ENCODE measurements at regions of chr13 and their contacts with region 1.

Region 1: DNA sequence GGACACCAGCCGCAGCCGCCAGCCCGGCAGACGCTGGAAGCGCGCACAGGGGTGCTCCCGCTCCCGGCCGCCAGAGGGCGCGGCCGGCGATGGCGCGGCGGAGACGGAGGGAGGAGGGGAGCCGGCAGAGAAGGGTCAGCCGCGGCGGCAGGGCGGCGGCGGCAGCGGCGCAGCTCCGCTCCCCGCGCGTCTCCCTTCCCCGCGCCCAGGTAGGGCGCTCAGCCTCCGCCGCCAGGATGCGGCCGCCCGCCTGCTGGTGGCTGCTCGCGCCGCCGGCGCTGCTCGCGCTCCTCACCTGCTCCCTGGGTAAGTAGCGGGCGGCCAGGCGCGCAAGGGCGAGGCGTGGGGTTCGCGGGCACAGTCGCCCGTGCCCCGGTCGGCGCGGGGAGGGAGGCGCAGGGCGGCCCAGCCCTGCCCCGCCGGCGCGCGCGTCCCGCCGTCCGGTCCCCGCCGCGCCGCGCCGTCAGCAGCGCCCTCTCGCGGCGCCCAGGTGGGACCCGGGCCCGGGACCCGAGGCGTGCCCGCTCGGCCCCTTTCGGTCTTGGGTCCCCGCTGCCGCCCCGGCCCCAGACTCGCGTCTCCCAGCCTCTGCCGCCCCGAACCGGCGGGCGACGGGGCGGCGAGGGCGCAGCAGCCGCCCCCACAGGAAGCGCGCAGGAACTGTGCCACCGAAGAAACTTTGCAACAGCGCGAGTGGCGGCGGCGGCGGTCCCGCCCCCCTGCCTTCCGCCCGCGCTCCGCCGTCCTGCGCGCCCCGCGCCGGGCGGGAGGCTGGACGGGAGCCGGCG is at the start of gene B3GLCT:
- DNase-seq: no peak
- H3K4me3 ChIP-seq: peak within 1 kb of the TSS; percentile 70
- CTCF ChIP-seq: peak; percentile 89

Region 2: DNA sequence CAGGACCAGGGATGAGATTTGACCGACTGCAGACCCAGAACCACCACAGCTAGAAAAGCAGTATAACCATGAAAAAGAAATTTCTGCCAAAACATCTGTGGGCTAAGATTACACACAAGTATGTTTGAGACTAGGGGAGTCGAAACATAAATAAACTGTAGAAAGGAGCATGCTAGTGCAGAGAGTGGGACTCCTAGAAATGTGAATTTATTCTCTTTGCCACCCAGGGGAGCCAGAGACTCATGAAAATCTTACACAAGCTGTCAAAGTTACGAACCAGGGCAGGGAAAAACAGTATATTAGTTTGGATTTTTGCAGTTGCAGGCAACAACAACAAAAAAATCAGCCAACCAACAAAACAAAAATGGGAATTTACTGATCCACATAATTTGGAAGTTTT is 26.0 kb before region 1 on chr13:
- CTCF ChIA-PET with region 1: interaction called, 12 read pairs
- POLR2A ChIA-PET with region 1: no interaction called
- DNase-seq: no peak
- H3K4me3 ChIP-seq: no peak overlapping the region
- CTCF ChIP-seq: peak; percentile 22

Measured in AG04449 (cell line).